ENCODE measurements at regions of chrX and their contacts with region 1.

Region 1: DNA sequence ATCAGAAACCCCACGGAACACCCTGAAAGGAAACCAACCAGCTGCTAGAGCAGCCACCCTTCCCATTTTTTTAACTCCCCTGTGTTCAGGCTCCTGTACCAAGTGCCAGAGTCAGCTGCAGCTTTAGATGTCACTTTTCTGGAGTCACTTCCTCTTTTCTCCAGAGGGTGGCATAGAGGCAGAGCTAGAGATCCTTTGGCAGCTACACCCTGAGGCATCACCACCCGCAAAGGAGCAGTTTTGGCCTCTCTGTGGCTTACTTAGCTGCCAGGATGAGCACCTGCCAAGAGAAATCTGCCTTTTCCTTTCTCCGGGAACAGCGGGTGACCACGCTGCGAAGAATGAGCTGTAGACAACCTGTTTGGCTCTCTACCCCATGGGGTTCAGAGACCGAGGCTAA is 58.0 kb upstream of the CHRDL1 start:
- DNase-seq: no peak
- H3K4me3 ChIP-seq: no peak overlapping the region
- H3K27ac ChIP-seq: no peak overlapping the region
- H3K4me1 ChIP-seq: no peaks in the 10 kb centered on the region
- H3K27me3 ChIP-seq: no peaks in the 10 kb centered on the region
- CTCF ChIP-seq: peak; percentile 5 to 55 (median 53)
- EP300 ChIP-seq: no peak
- POLR2A ChIP-seq: no peak
- RAD21 ChIP-seq: peak; percentile 48 to 58

Region 2: DNA sequence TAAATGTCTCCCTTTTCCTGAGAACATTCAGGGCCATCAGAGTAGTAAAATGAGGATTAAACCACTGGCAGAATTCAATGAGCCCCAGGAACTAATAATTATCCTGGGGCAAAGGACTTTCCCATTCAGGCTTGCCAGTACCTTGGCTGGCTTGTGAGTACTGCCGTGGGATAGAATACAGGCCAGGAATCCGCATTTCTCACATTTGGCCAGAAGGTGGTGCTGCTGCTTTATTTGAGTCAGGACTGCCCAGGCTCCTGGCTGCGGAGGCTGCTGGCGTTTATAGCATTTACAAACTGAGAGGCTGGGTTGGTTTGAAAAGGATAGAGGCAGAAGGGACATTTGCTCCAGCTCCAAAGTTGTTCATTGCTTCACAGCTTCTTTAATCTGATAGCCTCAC is 403.6 kb before region 1 on chrX:
- CTCF ChIA-PET with region 1: interaction called, 66 read pairs
- POLR2A ChIA-PET with region 1: no interaction called
- DNase-seq: peak; percentile 25 to 80
- H3K4me3 ChIP-seq: no peak overlapping the region
- H3K27ac ChIP-seq: no peak overlapping the region
- H3K4me1 ChIP-seq: peaks cover 0 to 6% (median under 1%) of the 10 kb centered on the region in 4 experiments; a peak in 4 of 7 replicates
- H3K27me3 ChIP-seq: no peaks in the 10 kb centered on the region
- CTCF ChIP-seq: peak; percentile 63 to 77 (median 77)
- EP300 ChIP-seq: no peak
- POLR2A ChIP-seq: no peak
- RAD21 ChIP-seq: peak; percentile 90 to 93

Region 3: DNA sequence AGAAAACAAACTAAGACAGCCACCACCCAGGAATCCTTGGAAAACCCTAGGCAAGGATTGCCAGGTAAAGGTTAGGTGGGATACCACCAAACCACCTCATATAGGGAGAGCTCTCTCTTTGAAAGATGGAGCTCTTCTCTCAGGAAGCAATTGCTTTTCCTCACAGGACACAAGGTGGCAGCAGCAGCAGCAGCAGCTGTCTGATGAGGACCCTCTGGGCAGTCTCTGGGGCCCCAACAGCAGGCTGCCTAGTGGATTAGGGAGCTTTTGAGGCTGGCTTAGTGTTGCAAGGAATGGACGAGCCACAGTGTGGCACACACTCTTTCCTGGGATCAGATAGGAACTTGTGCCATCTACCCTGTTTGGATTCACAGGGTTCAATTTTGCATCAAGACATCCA is 16.6 kb before region 1 on chrX:
- CTCF ChIA-PET with region 1: interaction called, 10 read pairs
- POLR2A ChIA-PET with region 1: no interaction called
- DNase-seq: no peak
- H3K4me3 ChIP-seq: no peak overlapping the region
- H3K27ac ChIP-seq: no peak overlapping the region
- H3K4me1 ChIP-seq: no peaks in the 10 kb centered on the region
- H3K27me3 ChIP-seq: no peaks in the 10 kb centered on the region
- CTCF ChIP-seq: peak in 2 of 3 experiments; percentile 43 to 64; a peak in 3 of 4 replicates
- EP300 ChIP-seq: no peak
- POLR2A ChIP-seq: no peak
- RAD21 ChIP-seq: peak; percentile 45 to 58; a peak in 3 of 4 replicates

Region 4: GRCh38 chrX:110964786-110965185 is 111.2 kb after region 1 on chrX:
- CTCF ChIA-PET with region 1: interaction called, 10 read pairs
- POLR2A ChIA-PET with region 1: no interaction called
- DNase-seq: peak in 1 of 2 experiments; percentile 54
- H3K4me3 ChIP-seq: peak overlapping the region in 1 of 4 experiments; percentile 22; a peak in 2 of 8 replicates
- H3K27ac ChIP-seq: no peak overlapping the region
- H3K4me1 ChIP-seq: peaks cover 0 to 10% (median 7%) of the 10 kb centered on the region in 4 experiments; a peak in 5 of 7 replicates
- H3K27me3 ChIP-seq: no peaks in the 10 kb centered on the region
- CTCF ChIP-seq: no peak
- EP300 ChIP-seq: no peak
- POLR2A ChIP-seq: 0 out of 3 replicates have a peak, but pooled peaks of 1 of the 2 experiments have one; percentile 40
- RAD21 ChIP-seq: no peak

Region 5: DNA sequence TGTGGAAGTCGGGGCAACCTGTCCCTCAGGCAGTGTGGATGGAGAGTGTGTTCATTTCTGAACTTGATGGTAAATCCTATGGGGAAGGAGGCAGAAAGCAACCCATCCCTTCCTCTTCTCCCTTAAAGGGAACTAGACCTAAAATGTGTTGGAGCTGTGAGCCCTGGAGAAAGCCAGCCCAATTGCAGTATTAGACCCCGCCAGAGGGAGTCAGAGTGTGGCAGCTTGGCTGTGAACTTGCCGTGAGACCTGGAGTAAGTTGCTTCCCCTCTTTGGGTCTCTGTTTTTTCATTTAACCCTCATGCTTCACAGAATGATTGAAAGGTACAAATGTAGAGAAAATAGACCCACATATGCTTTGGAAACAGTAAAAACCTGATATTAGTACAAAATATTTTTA is 133.7 kb after region 1 on chrX:
- CTCF ChIA-PET with region 1: interaction called, 12 read pairs
- POLR2A ChIA-PET with region 1: no interaction called
- DNase-seq: peak in 1 of 2 experiments; percentile 47
- H3K4me3 ChIP-seq: no peak overlapping the region
- H3K27ac ChIP-seq: no peak overlapping the region
- H3K4me1 ChIP-seq: peaks cover 0 to 2% (median 0%) of the 10 kb centered on the region in 4 experiments; a peak in 1 of 7 replicates
- H3K27me3 ChIP-seq: no peaks in the 10 kb centered on the region
- CTCF ChIP-seq: peak; percentile 35 to 55 (median 45)
- EP300 ChIP-seq: no peak
- POLR2A ChIP-seq: no peak
- RAD21 ChIP-seq: peak; percentile 36 to 54

Region 6: DNA sequence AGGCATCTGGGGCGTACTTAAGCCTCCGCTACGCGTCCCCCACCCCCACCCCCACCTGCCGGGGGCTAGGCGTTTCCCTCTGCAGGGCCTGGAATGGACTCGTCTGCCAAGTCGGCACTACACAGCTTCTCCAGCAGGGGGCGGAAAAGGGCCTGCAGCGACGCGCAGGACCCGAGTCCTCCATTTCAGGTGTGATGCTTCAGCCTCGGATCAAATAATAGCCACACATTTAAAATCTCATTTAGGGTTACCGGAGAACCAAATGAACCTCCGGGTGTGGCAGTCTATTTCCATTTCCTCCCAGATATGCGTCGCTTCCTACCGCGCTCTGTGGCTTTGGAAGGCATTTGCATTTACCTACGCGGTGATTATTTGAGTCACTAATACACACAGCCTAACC is 245.3 kb after region 1 on chrX:
- CTCF ChIA-PET with region 1: interaction called, 19 read pairs
- POLR2A ChIA-PET with region 1: no interaction called
- DNase-seq: peak in 1 of 2 experiments; percentile 81
- H3K4me3 ChIP-seq: peak overlapping the region in 1 of 4 experiments; percentile 32; a peak in 1 of 8 replicates
- H3K27ac ChIP-seq: no peak overlapping the region
- H3K4me1 ChIP-seq: peaks cover 0 to 4% (median 1%) of the 10 kb centered on the region in 4 experiments; a peak in 4 of 7 replicates
- H3K27me3 ChIP-seq: no peaks in the 10 kb centered on the region
- CTCF ChIP-seq: peak; percentile 67 to 77 (median 70)
- EP300 ChIP-seq: peak in 1 of 2 experiments; percentile 78; a peak in 2 of 3 replicates
- POLR2A ChIP-seq: no peak
- RAD21 ChIP-seq: peak; percentile 41 to 57; a peak in 3 of 4 replicates

Region 7: DNA sequence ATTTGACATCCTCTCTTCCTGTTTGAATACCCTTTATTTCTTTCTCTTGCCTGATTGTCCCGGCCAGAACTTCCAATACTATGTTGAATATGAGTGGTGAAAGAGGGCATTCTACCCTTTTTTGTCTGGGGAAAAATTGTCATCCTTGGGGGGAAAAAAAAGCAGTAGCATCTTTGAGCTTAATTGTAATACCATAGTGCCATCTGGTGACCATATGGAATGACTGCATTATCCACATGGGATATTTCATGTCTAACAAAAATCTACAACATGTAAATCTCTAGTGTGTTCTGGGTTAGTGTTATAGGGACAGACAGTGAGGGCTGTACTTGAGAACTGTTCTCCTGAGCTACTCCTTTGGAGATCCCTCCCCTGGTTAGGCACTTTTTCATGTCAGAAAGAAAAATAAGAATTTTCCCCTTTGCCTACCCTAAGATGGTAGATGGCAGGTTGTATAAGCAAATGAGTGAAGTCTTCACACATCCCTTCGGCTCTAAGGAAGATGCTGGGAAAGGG is 390.7 kb after region 1 on chrX:
- CTCF ChIA-PET with region 1: interaction called, 14 read pairs
- POLR2A ChIA-PET with region 1: no interaction called
- DNase-seq: no peak
- H3K4me3 ChIP-seq: no peak overlapping the region
- H3K27ac ChIP-seq: no peak overlapping the region
- H3K4me1 ChIP-seq: no peaks in the 10 kb centered on the region
- H3K27me3 ChIP-seq: no peaks in the 10 kb centered on the region
- CTCF ChIP-seq: peak in 1 of 3 experiments; percentile 34; a peak in 2 of 4 replicates
- EP300 ChIP-seq: no peak
- POLR2A ChIP-seq: no peak
- RAD21 ChIP-seq: peak; percentile 67 to 70